Heart left ventricle (tissue), 16 donors: ENCODE measurements at regions of chr20 and their contacts with region 1.

Region 1: GRCh38 chr20:47479506-47479905 is 22.2 kb upstream of the NCOA3 start:
- DNase-seq: peak in 2 of 5 donors; percentile 20 to 25
- ATAC-seq: peak; percentile 51 to 88 (median 74)
- H3K4me3 ChIP-seq: no peak overlapping the region
- H3K27ac ChIP-seq: peak overlapping the region; percentile 23 to 75 (median 52)
- H3K4me1 ChIP-seq: peaks cover 0 to 11% (median 6%) of the 10 kb centered on the region in 12 donors
- H3K27me3 ChIP-seq: no peaks in the 10 kb centered on the region
- CTCF ChIP-seq: no peak
- POLR2A ChIP-seq: no peak

Region 2: GRCh38 chr20:47411161-47411560 is 68.3 kb before region 1 on chr20:
- intact Hi-C with region 1: loop called in 3 of 10 experiments (anchors 5 to 10 kb)
- DNase-seq: peak in 2 of 5 donors; percentile 22 to 45
- ATAC-seq: peak; percentile 78 to 80 (median 79)
- H3K4me3 ChIP-seq: peak overlapping the region in 1 of 12 donors; percentile 11
- H3K27ac ChIP-seq: peak overlapping the region; percentile 33 to 81 (median 62)
- H3K4me1 ChIP-seq: peaks cover 0 to 46% (median 24%) of the 10 kb centered on the region in 12 donors
- H3K27me3 ChIP-seq: no peaks in the 10 kb centered on the region
- CTCF ChIP-seq: no peak
- POLR2A ChIP-seq: peak in 1 of 2 donors; percentile 29

Region 3: GRCh38 chr20:47418061-47418912 is 61.2 kb before region 1 on chr20:
- intact Hi-C with region 1: loop called in 4 of 10 experiments (anchors 5 to 10 kb)
- DNase-seq: no peak
- ATAC-seq: no peak
- H3K4me3 ChIP-seq: no peak overlapping the region
- H3K27ac ChIP-seq: no peak overlapping the region
- H3K4me1 ChIP-seq: peaks cover 0 to 42% (median 10%) of the 10 kb centered on the region in 12 donors
- H3K27me3 ChIP-seq: no peaks in the 10 kb centered on the region
- CTCF ChIP-seq: no peak
- POLR2A ChIP-seq: no peak

Region 4: GRCh38 chr20:47428164-47428563 is 51.3 kb before region 1 on chr20:
- intact Hi-C with region 1: loop called in 1 of 10 experiments (anchors 10 kb)
- DNase-seq: no peak
- ATAC-seq: no peak
- H3K4me3 ChIP-seq: no peak overlapping the region
- H3K27ac ChIP-seq: no peak overlapping the region
- H3K4me1 ChIP-seq: no peaks in the 10 kb centered on the region
- H3K27me3 ChIP-seq: no peaks in the 10 kb centered on the region
- CTCF ChIP-seq: no peak
- POLR2A ChIP-seq: no peak

Region 5: GRCh38 chr20:47438577-47439381 is 40.7 kb before region 1 on chr20:
- intact Hi-C with region 1: no loop called
- DNase-seq: peak in 1 of 5 donors; percentile 20
- ATAC-seq: peak in 3 of 4 donors; percentile 38 to 48 (median 41)
- H3K4me3 ChIP-seq: no peak overlapping the region
- H3K27ac ChIP-seq: peak overlapping the region in 1 of 12 donors; percentile 17
- H3K4me1 ChIP-seq: peaks cover 0 to 12% (median 0%) of the 10 kb centered on the region in 12 donors
- H3K27me3 ChIP-seq: no peaks in the 10 kb centered on the region
- CTCF ChIP-seq: no peak
- POLR2A ChIP-seq: no peak

Region 6: DNA sequence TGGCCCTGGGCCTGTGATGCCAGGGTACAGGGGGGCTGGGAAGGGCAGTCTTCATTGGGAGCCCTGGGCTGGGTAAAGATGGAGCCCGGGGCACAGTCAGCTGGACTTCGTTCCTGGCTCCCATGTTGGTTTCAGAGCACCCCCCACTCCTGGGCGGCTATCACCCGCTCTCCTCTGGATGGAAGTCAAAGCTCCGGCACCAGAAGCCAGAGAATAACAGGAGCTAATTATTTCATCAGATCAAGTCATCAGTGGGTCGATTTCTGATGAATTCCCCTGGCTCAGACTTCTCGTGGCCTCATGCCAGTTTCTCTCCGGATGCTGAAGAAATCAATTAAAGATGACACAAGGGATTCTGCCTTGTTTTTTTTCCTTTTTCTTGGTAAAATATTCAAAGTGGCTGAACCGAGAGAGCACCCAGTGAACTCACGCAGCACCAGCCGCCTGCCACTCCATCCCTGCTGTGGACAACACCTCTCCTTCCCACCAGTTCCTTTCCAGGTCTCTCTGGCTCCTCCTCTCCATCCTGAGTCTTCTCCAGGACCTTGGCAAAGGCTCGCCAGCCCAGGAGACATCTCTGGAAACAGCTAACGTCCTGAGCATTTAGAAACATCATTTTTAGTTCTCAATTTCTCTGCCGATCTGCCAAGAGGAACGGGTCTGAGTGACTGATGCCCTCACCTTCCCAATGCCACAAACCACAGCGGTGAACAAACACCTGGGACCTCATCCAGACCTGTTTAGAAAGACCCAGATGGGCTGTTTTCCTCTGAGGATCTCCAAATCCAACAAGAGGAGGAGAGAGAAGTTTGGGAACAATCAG is 283.4 kb after region 1 on chr20:
- intact Hi-C with region 1: no loop called
- DNase-seq: no peak
- ATAC-seq: no peak
- H3K4me3 ChIP-seq: no peak overlapping the region
- H3K27ac ChIP-seq: no peak overlapping the region
- H3K4me1 ChIP-seq: peaks cover 0 to 41% (median 17%) of the 10 kb centered on the region in 12 donors
- H3K27me3 ChIP-seq: peaks cover 0 to 16% (median 4%) of the 10 kb centered on the region in 9 donors
- CTCF ChIP-seq: no peak
- POLR2A ChIP-seq: no peak